Naive thymus-derived CD4-positive, alpha-beta T cell (primary cell): ENCODE measurements at regions of chr6 and their contacts with region 1.

Region 1: DNA sequence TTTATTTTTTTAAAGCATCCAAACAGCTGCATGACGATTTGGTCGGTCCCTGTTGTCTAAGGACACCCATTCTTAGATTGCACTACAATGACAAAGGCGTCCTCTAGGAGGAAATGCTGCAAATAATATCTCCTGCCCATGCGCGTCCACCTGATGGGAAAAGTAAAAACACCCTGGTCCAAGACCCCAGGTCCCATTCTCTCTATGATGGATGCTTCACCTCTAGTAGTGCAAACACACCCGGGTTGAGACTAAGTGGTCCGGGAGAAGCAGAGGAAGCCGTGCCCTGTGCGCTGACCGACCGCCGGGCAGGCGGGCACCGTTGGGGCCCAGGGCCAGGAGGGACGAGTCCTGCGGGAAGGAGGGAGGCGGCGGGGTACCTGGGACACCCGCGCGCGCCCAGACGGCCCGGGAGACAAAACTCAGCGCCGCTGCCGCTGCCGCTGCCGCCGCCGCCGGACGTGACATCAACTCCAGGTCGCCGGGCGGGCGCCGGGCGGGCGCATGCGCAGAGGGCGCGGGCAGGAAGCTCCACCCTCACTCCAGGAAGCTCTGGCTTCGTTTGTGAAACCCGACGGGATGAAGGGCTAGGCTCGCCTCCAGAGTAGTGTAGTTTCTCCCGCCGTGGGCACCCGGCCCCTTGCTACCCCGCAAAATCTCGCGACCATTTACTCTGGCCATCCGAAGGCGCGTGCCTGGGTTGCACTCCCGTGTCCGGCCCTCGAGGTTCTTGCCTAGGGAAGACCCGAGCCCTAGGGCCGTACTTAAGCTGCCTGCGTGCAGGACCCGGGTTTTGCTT is at the start of gene TBC1D7:
- DNase-seq: peak; percentile 89 to 97 (median 93)
- ATAC-seq: peak; percentile 92
- H3K4me3 ChIP-seq: peak within 1 kb of the TSS; percentile 99
- H3K4me3 Mint-ChIP-seq: peak within 1 kb of the TSS; percentile 83 to 96 (median 91)
- H3K27ac ChIP-seq: peak within 1 kb of the TSS; percentile 97
- H3K27ac Mint-ChIP-seq: peak within 1 kb of the TSS; percentile 94 to 99 (median 97)
- H3K4me1 ChIP-seq: peaks cover 5 to 15% of the 10 kb centered on the region in 2 donors
- H3K4me1 Mint-ChIP-seq: peaks cover 5 to 34% (median 31%) of the 10 kb centered on the region in 7 donors
- H3K27me3 ChIP-seq: no peaks in the 10 kb centered on the region
- H3K27me3 Mint-ChIP-seq: no peaks in the 10 kb centered on the region
- total RNA-seq, gene TBC1D7: 14.8 to 34.6 (median 17.0) TPM

Region 2: GRCh38 chr6:11537229-11538051 is 1790.8 kb before region 1 on chr6 and contains the start of gene TMEM170B:
- CTCF ChIA-PET with region 1: no interaction called
- POLR2A ChIA-PET with region 1: no interaction called
- intact Hi-C with region 1: loop called in 1 of 2 experiments (anchors 1 kb)
- DNase-seq: peak; percentile 94 to 99 (median 98)
- ATAC-seq: peak; percentile 95
- H3K4me3 ChIP-seq: peak within 1 kb of the TSS; percentile 62
- H3K4me3 Mint-ChIP-seq: peak within 1 kb of the TSS; percentile 82 to 90 (median 88)
- H3K27ac ChIP-seq: peak within 1 kb of the TSS; percentile 76
- H3K27ac Mint-ChIP-seq: peak within 1 kb of the TSS in 8 of 9 donors; percentile 67 to 93 (median 83)
- H3K4me1 ChIP-seq: peaks cover 4 to 5% of the 10 kb centered on the region in 2 donors
- H3K4me1 Mint-ChIP-seq: peaks cover 6 to 28% (median 19%) of the 10 kb centered on the region in 7 donors
- H3K27me3 ChIP-seq: no peaks in the 10 kb centered on the region
- H3K27me3 Mint-ChIP-seq: peaks cover 0 to 76% (median 7%) of the 10 kb centered on the region in 5 donors
- total RNA-seq, gene TMEM170B: 0.29 to 12.7 (median 3.4) TPM

Region 3: DNA sequence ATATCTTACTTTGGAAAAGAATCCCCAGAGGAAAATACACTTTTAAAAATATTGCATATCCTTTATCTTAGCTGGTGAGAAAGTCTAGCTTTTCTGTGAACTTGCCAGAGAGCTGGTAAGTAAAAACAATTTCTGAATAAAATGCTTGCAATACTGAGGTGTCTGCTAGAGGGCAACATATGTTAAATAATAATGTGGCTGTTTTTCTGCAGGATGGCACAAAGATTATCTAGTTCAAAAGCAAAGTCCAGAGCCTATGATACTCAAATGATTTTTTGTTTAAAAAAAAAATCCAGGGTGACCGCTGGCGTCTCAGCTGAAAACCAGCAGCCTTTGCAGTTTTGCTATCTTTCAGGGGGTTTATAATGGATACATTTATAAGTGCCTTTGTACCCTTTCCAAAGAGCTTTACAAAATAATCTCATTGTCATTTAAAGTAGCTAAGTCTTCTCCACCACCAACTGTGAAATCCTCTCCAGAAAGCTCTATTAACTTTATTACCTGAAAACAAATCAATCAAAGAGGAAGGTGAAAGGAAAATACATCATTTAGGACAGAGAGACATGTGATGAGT is 416.8 kb before region 1 on chr6:
- CTCF ChIA-PET with region 1: interaction called, 3 read pairs
- POLR2A ChIA-PET with region 1: interaction called, 4 read pairs
- intact Hi-C with region 1: loop called in 1 of 2 experiments (anchors 1 kb)
- DNase-seq: peak in 3 of 9 donors; percentile 4 to 16 (median 7)
- ATAC-seq: no peak
- H3K4me3 ChIP-seq: no peak overlapping the region
- H3K4me3 Mint-ChIP-seq: no peak overlapping the region
- H3K27ac ChIP-seq: no peak overlapping the region
- H3K27ac Mint-ChIP-seq: no peak overlapping the region
- H3K4me1 ChIP-seq: no peaks in the 10 kb centered on the region
- H3K4me1 Mint-ChIP-seq: peaks cover 0 to 2% (median 0%) of the 10 kb centered on the region in 7 donors
- H3K27me3 ChIP-seq: no peaks in the 10 kb centered on the region
- H3K27me3 Mint-ChIP-seq: peaks cover 0 to 24% (median 8%) of the 10 kb centered on the region in 5 donors

Region 4: GRCh38 chr6:13099771-13100170 is 228.5 kb before region 1 on chr6:
- CTCF ChIA-PET with region 1: no interaction called
- POLR2A ChIA-PET with region 1: no interaction called
- intact Hi-C with region 1: no loop called
- DNase-seq: no peak
- ATAC-seq: no peak
- H3K4me3 ChIP-seq: no peak overlapping the region
- H3K4me3 Mint-ChIP-seq: no peak overlapping the region
- H3K27ac ChIP-seq: no peak overlapping the region
- H3K27ac Mint-ChIP-seq: no peak overlapping the region
- H3K4me1 ChIP-seq: no peaks in the 10 kb centered on the region
- H3K4me1 Mint-ChIP-seq: no peaks in the 10 kb centered on the region
- H3K27me3 ChIP-seq: no peaks in the 10 kb centered on the region
- H3K27me3 Mint-ChIP-seq: peaks cover 8 to 24% (median 10%) of the 10 kb centered on the region in 5 donors

Region 5: DNA sequence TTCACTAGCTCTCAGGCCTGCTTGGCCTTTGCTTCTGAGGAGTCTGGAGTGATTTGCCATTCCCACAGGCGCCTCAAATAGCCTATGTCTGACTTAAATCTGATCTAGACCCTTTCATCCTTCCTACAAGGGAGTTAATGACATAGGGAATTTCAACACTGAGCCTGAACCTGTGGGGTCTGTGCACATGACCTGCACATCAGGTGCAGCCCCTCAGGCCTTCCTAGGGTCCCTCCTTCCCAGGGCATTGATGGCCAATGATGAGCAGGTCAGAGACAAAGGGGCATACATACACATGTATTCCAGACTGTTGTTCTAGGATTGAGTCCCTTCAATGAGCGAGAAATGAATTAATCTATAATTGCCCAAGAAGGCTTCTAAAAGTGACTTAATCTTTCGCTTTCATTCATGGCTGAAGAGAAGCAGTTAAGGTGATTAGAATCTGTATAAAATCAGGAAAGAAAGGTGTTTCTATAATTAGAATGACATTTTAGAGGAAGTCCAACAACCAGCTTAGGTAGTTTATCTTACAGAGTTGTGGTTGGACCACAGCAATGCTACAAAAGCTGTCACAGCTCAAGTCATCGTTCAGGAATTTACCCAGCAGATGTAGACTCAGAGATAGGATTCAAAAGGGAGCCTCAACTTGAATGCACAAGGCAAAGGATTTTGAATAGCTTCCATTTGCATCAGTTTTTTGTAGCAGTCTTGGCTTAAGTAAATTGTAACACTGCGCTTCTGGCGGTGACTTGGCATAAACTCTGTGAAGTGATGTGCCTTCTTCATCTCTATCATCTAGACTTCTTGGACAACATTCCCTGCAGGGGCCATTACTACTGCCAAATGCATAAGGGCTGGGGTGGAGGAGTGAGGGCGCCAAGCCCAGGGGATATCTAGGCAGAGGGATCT is 27.0 kb after region 1 on chr6:
- CTCF ChIA-PET with region 1: interaction called, 3 read pairs
- POLR2A ChIA-PET with region 1: interaction called, 25 read pairs
- intact Hi-C with region 1: loop called (anchors 1 kb)
- DNase-seq: peak in 8 of 9 donors; percentile 10 to 42 (median 30)
- ATAC-seq: peak; percentile 75
- H3K4me3 ChIP-seq: peak overlapping the region; percentile 22
- H3K4me3 Mint-ChIP-seq: peak overlapping the region; percentile 78 to 91 (median 80)
- H3K27ac ChIP-seq: peak overlapping the region; percentile 46
- H3K27ac Mint-ChIP-seq: peak overlapping the region; percentile 71 to 98 (median 85)
- H3K4me1 ChIP-seq: peaks cover 27 to 32% of the 10 kb centered on the region in 2 donors
- H3K4me1 Mint-ChIP-seq: peaks cover 33 to 56% (median 46%) of the 10 kb centered on the region in 7 donors
- H3K27me3 ChIP-seq: no peaks in the 10 kb centered on the region
- H3K27me3 Mint-ChIP-seq: no peaks in the 10 kb centered on the region

Region 6: DNA sequence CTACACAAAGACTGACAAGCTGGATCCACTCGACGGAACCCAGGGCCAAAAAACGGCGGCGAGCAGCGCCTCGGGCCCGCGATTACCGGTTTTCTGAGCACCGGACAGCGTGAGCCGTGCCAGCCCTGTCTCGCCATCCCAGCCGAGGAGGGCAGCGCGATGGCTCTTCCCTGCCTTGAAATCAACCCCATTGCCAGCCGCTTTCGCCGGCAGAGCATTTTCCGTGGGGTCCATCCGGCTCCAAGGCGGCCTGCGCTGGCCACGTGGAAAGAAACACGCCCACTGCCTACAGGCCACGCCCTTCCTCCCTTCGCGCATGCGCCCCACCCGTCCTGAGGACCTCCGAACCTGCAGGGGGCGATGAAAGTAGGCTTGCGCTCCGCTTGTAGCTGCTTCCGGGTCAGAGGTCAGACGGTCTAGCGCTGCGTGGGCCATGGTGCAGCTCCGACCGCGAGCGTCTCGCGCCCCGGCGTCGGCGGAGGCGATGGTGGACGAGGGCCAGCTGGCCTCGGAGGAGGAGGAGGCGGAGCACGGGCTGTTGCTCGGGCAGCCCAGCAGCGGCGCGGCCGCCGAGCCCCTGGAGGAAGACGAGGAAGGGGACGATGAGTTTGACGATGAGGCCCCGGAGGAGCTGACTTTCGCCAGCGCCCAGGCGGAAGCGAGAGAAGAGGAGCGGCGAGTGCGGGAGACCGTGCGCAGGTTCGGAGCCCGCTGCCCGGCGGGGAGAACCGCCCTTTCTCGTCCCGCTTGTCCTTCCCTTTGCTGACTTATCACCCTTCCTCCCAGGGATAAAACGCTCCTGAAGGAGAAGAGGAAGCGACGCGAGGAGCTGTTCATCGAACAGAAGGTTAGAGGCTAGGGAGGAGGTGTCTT is 286.9 kb after region 1 on chr6 and contains the start of gene NOL7:
- CTCF ChIA-PET with region 1: no interaction called
- POLR2A ChIA-PET with region 1: interaction called, 20 read pairs
- intact Hi-C with region 1: loop called (anchors 1 kb)
- DNase-seq: peak; percentile 96 to 99 (median 98)
- ATAC-seq: peak; percentile 98
- H3K4me3 ChIP-seq: peak within 1 kb of the TSS; percentile 85
- H3K4me3 Mint-ChIP-seq: peak within 1 kb of the TSS; percentile 82 to 98 (median 94)
- H3K27ac ChIP-seq: peak within 1 kb of the TSS; percentile 81
- H3K27ac Mint-ChIP-seq: peak within 1 kb of the TSS; percentile 85 to 97 (median 94)
- H3K4me1 ChIP-seq: peaks cover 8 to 26% of the 10 kb centered on the region in 2 donors
- H3K4me1 Mint-ChIP-seq: peaks cover 25 to 55% (median 47%) of the 10 kb centered on the region in 7 donors
- H3K27me3 ChIP-seq: no peaks in the 10 kb centered on the region
- H3K27me3 Mint-ChIP-seq: peaks cover 0 to 2% (median 0%) of the 10 kb centered on the region in 5 donors
- total RNA-seq, gene NOL7: 49.1 to 65.2 (median 62.1) TPM

Region 7: GRCh38 chr6:13814176-13814937 is 486.1 kb after region 1 on chr6 and contains the start of gene MCUR1:
- CTCF ChIA-PET with region 1: no interaction called
- POLR2A ChIA-PET with region 1: interaction called, 3 read pairs
- intact Hi-C with region 1: loop called (anchors 2 to 5 kb)
- DNase-seq: peak; percentile 69 to 87 (median 76)
- ATAC-seq: peak; percentile 91
- H3K4me3 ChIP-seq: peak within 1 kb of the TSS; percentile 71
- H3K4me3 Mint-ChIP-seq: peak within 1 kb of the TSS; percentile 87 to 92 (median 90)
- H3K27ac ChIP-seq: peak within 1 kb of the TSS; percentile 82
- H3K27ac Mint-ChIP-seq: peak within 1 kb of the TSS; percentile 60 to 93 (median 85)
- H3K4me1 ChIP-seq: peaks cover 0 to 13% of the 10 kb centered on the region in 2 donors
- H3K4me1 Mint-ChIP-seq: peaks cover 17 to 40% (median 38%) of the 10 kb centered on the region in 7 donors
- H3K27me3 ChIP-seq: no peaks in the 10 kb centered on the region
- H3K27me3 Mint-ChIP-seq: peaks cover 0 to 25% (median 0%) of the 10 kb centered on the region in 5 donors
- total RNA-seq, gene MCUR1: 5.7 to 20.6 (median 10.0) TPM